ENCODE measurements at regions of chr4 and their contacts with region 1.

Region 1: GRCh38 chr4:10096201-10096977 is 20.2 kb downstream of the WDR1 start:
- DNase-seq: peak; percentile 94
- ATAC-seq: peak; percentile 69
- H3K4me3 ChIP-seq: no peak overlapping the region
- H3K27ac ChIP-seq: peak overlapping the region; percentile 83
- H3K4me1 ChIP-seq: peaks cover 61% of the 10 kb centered on the region
- H3K27me3 ChIP-seq: no peaks in the 10 kb centered on the region
- CTCF ChIP-seq: no peak
- POLR2A ChIP-seq: no peak
- RAD21 ChIP-seq: no peak

Region 2: GRCh38 chr4:8428293-8429097 is 1667.9 kb before region 1 on chr4:
- CTCF ChIA-PET with region 1: no interaction called
- POLR2A ChIA-PET with region 1: no interaction called
- dilution Hi-C with region 1: no loop called
- in situ Hi-C with region 1: loop called (anchors 25 kb)
- intact Hi-C with region 1: no loop called
- DNase-seq: peak; percentile 80
- ATAC-seq: peak; percentile 98
- H3K4me3 ChIP-seq: peak overlapping the region; percentile 82
- H3K27ac ChIP-seq: peak overlapping the region; percentile 75
- H3K4me1 ChIP-seq: 0 out of 2 replicates have a peak, but pooled peaks cover 1% of the 10 kb centered on the region
- H3K27me3 ChIP-seq: no peaks in the 10 kb centered on the region
- CTCF ChIP-seq: peak; percentile 42
- POLR2A ChIP-seq: peak; percentile 84
- RAD21 ChIP-seq: peak; percentile 26; the same call in 1 of the 2 replicates

Region 3: DNA sequence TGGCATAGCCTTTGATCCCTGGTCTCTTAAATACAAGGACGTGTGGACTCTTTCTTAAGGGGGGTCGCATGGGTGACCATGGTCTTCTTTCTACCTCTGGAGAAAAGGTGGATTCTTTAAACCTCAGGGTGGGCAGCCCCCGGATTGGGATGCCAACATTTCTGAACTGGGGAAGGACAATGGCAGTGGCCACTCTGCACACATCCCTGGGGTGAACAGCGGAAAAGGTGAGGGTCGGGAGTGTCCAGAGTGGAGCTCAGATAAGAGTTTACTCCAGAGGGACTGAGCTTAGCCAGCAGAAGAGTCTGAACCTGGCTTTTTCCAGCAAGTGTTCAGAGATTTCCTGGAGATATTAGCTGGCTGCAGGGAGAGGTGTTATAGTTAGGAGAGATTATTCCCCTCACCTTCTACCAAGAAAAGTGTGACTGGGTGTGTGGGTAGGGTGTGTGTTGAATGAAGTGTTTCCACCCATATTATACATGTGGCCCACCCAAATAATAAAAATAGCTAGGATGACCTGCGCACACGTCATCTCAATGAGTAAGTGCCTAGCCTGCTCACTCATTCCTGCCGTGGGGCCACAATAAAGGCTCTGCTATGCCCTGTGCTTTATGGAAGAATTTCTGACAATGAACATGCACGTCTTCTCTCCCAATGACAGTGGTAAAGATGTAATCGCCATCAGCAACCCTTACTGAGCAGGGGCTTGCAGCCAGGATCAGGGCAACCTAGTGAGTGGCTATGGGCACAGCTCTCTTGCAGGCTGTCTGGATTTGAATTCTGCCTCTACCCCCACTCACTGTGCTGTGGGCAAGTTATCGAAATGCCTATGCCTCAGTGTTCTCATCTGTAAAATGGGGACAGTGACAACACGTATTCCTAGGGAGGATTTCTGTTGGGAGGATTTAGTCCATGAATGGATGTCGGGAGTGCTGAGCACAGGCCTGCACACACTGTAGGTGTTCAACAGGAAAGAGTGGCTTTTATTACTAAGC is 151.7 kb before region 1 on chr4:
- CTCF ChIA-PET with region 1: no interaction called
- POLR2A ChIA-PET with region 1: no interaction called
- dilution Hi-C with region 1: no loop called
- in situ Hi-C with region 1: no loop called
- intact Hi-C with region 1: no loop called
- DNase-seq: no peak
- ATAC-seq: no peak
- H3K4me3 ChIP-seq: no peak overlapping the region
- H3K27ac ChIP-seq: no peak overlapping the region
- H3K4me1 ChIP-seq: no peaks in the 10 kb centered on the region
- H3K27me3 ChIP-seq: no peaks in the 10 kb centered on the region; the same call in 1 of the 2 replicates
- CTCF ChIP-seq: no peak
- POLR2A ChIP-seq: no peak
- RAD21 ChIP-seq: no peak

Region 4: GRCh38 chr4:10045481-10045880 is 50.9 kb before region 1 on chr4:
- CTCF ChIA-PET with region 1: no interaction called
- POLR2A ChIA-PET with region 1: no interaction called
- dilution Hi-C with region 1: no loop called
- in situ Hi-C with region 1: no loop called
- intact Hi-C with region 1: loop called (anchors 5 kb)
- DNase-seq: peak; percentile 20
- ATAC-seq: peak; percentile 57
- H3K4me3 ChIP-seq: no peak overlapping the region
- H3K27ac ChIP-seq: no peak overlapping the region
- H3K4me1 ChIP-seq: no peaks in the 10 kb centered on the region
- H3K27me3 ChIP-seq: no peaks in the 10 kb centered on the region
- CTCF ChIP-seq: no peak
- POLR2A ChIP-seq: no peak
- RAD21 ChIP-seq: no peak

Region 5: DNA sequence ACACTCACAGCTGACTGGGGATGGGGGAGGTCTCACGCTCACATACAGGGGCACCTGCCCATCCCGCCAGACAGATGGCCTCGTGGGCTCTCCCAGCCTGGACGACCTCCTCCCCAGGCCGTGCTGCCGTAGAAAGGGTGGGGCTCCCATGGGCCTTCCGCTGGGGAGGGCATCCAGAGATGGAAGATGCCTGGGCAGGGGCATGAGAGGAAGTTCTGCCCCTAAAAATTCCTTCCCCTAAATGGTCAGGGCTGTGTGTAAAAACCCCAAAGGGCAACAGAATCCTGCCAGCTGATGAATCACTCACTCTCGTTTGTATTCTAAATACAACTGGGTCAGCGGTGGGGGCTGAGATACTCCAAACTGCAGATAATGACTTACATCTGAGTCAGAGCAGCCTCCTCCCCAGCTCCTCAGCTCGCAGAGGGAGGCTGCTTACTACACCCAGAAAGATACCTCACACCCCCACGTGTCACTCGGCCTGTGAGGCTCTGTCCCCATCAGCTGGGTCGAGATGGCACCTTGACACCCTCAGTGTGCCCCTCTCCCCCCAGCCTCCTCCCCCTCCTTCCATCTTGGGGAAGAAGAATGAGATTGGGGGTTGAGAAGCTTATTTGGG is 10.1 kb after region 1 on chr4:
- CTCF ChIA-PET with region 1: no interaction called
- POLR2A ChIA-PET with region 1: interaction called, 3 read pairs
- dilution Hi-C with region 1: no loop called
- in situ Hi-C with region 1: no loop called
- intact Hi-C with region 1: loop called (anchors 1 kb)
- DNase-seq: peak; percentile 97
- ATAC-seq: peak; percentile 82
- H3K4me3 ChIP-seq: peak overlapping the region; percentile 8; the same call in 1 of the 2 replicates
- H3K27ac ChIP-seq: peak overlapping the region; percentile 94
- H3K4me1 ChIP-seq: peaks cover 73% of the 10 kb centered on the region
- H3K27me3 ChIP-seq: no peaks in the 10 kb centered on the region
- CTCF ChIP-seq: no peak
- POLR2A ChIP-seq: no peak
- RAD21 ChIP-seq: no peak

Region 6: DNA sequence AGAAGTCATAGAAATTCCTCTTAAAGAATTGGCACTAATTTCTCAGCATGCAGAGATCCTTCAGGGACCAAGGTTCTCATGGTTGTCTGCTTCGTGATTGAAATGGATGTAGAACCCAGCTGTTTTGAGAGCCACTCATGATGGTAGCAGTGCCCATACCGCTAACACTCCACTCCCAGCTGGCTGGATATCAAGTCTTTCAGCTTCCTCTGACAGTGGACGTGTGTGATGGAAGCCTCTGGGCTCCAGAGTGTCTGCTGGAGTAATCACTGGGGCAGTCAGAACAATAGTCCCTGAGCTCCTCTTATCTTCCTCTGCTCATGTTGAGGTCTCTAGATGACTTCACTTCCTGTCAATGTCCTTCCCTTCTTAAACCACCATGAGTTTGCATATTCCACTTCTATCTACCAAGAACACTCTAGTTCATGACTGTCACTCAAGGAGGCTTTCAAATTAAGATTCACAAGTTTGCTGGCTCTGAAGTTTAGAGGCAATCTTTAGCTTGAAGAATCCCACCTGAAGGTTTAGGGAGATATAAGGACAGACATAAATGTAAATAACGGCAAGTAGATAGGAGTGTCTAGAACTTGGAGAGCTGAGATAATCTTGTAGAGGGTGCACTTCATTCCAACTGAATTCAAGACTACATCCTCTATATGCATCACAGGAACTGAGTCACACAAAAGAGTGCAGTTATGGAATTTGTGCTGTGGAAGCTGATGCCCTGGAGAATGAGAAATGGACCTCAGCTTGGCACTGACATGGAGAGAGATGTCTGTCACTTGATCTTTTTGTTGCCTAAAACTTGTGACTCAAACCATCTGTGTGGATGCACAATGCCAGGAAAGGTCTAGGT is 84.8 kb after region 1 on chr4:
- CTCF ChIA-PET with region 1: no interaction called
- POLR2A ChIA-PET with region 1: no interaction called
- dilution Hi-C with region 1: no loop called
- in situ Hi-C with region 1: loop called (anchors 25 kb)
- intact Hi-C with region 1: no loop called
- DNase-seq: peak; percentile 51
- ATAC-seq: 0 out of 2 replicates have a peak, but pooled peaks have one; percentile 36
- H3K4me3 ChIP-seq: no peak overlapping the region
- H3K27ac ChIP-seq: no peak overlapping the region
- H3K4me1 ChIP-seq: peaks cover 11% of the 10 kb centered on the region; the same call in 1 of the 2 replicates
- H3K27me3 ChIP-seq: no peaks in the 10 kb centered on the region
- CTCF ChIP-seq: no peak
- POLR2A ChIP-seq: no peak
- RAD21 ChIP-seq: no peak

Measured in IMR-90 (cell line).